CD4-positive, alpha-beta memory T cell (primary cell): ENCODE measurements at regions of chr3 and their contacts with region 1.

Region 1: GRCh38 chr3:125585595-125586223 is 9.6 kb downstream of the OSBPL11 start:
- DNase-seq: peak in 4 of 5 donors; percentile 24 to 33 (median 31)
- H3K4me3 ChIP-seq: no peak overlapping the region
- H3K4me3 Mint-ChIP-seq: peak overlapping the region in 2 of 8 donors; percentile 29 to 30
- H3K27ac ChIP-seq: no peak overlapping the region
- H3K27ac Mint-ChIP-seq: peak overlapping the region in 2 of 7 donors; percentile 29 to 43
- H3K4me1 ChIP-seq: peaks cover 22% of the 10 kb centered on the region
- H3K4me1 Mint-ChIP-seq: peaks cover 13 to 28% (median 19%) of the 10 kb centered on the region in 4 donors
- H3K27me3 ChIP-seq: no peaks in the 10 kb centered on the region
- H3K27me3 Mint-ChIP-seq: no peaks in the 10 kb centered on the region

Region 2: DNA sequence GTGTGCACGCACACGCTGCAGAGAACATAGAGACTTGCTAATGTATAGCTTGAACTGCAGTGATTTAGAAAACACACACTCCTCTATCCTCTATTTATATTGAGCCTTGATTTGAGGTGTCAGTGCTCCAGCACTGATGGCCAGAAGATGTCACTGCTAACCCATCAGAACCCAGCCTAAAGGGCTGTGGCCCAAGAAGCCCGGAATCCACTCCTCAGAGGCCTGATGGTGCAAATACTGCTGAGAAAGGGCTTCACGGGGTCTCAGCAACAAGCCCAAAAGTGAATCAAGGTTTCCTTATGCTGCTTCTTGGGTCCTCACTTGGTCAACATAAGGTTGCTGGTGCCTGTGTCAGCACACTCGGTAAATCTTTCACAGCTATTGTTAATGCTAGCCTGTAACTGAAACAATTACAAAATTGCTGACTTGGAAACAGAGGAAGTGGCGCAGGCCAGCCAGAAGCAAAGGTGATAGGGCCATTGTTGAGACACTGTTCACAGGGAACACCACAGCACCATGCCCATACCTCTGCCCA is 590.2 kb before region 1 on chr3:
- CTCF ChIA-PET with region 1: interaction called, 9 read pairs
- POLR2A ChIA-PET with region 1: no interaction called
- intact Hi-C with region 1: loop called (anchors 5 kb)
- DNase-seq: peak in 4 of 5 donors; percentile 42 to 48 (median 48)
- H3K4me3 ChIP-seq: no peak overlapping the region
- H3K4me3 Mint-ChIP-seq: no peak overlapping the region
- H3K27ac ChIP-seq: no peak overlapping the region
- H3K27ac Mint-ChIP-seq: peak overlapping the region in 2 of 7 donors; percentile 12 to 37
- H3K4me1 ChIP-seq: no peaks in the 10 kb centered on the region
- H3K4me1 Mint-ChIP-seq: peaks cover 0 to 5% (median under 1%) of the 10 kb centered on the region in 4 donors
- H3K27me3 ChIP-seq: no peaks in the 10 kb centered on the region
- H3K27me3 Mint-ChIP-seq: no peaks in the 10 kb centered on the region

Region 3: DNA sequence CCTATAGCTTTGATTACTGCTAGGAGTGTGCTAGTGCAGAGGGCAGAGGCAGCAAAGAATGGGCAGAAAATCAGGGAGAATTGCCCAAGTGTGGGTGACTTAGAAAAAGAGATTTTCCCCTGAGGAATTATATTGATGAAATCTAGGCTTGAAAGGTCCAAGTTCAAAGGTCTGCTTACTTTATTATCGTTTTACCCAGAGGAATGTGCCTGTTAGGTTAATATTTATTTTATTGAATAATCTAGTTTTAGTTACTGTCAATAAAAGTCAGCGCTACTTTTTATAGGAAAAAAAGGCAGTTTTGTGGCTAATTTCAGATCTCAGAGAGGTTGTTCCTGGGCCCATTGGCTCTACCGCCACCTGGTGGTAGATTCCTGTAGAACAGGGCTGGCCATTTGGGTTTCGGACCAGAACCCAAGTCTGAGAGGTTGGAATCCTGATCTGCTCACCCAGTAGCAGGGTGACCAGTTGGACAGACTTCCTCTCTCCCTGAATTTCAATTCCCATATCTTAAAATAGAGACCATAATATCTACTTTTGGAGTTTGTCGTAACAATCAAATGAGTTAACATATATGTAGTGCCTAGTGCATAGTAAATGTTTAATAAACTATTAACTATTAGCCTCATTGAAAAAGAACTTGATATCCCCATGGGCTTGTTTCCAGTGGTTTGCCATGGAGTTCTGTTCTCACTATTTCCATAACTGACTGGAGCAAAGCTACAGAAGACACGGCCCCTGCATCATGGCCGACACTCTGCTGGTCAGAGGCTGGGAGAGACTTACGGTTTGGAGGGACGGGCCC is 147.9 kb before region 1 on chr3:
- CTCF ChIA-PET with region 1: interaction called, 14 read pairs
- POLR2A ChIA-PET with region 1: no interaction called
- intact Hi-C with region 1: loop called (anchors 10 kb)
- DNase-seq: peak; percentile 45 to 60 (median 51)
- H3K4me3 ChIP-seq: no peak overlapping the region
- H3K4me3 Mint-ChIP-seq: no peak overlapping the region
- H3K27ac ChIP-seq: no peak overlapping the region
- H3K27ac Mint-ChIP-seq: no peak overlapping the region
- H3K4me1 ChIP-seq: no peaks in the 10 kb centered on the region
- H3K4me1 Mint-ChIP-seq: peaks cover 0 to 3% (median 3%) of the 10 kb centered on the region in 4 donors
- H3K27me3 ChIP-seq: no peaks in the 10 kb centered on the region
- H3K27me3 Mint-ChIP-seq: no peaks in the 10 kb centered on the region

Region 4: DNA sequence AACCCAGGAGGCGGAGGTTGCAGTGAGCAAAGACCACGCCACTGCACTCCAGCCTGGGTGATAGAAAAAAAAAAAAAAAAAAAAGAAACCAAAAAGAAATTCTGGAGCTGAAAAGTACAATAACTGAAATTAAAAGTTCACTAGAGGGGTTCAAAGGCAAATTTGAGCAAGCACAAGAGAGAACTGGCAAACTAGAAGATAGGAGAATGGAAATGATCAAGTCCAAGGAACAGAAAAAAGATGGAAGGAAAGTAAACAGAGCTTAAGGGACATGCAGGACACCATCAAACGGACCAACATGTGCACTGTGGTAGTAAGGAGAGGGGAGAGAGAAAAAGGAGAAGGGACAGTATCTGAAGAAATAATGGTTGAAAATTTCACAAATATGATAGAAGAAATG is 78.6 kb before region 1 on chr3:
- CTCF ChIA-PET with region 1: no interaction called
- POLR2A ChIA-PET with region 1: no interaction called
- intact Hi-C with region 1: no loop called
- DNase-seq: no peak
- H3K4me3 ChIP-seq: no peak overlapping the region
- H3K4me3 Mint-ChIP-seq: peak overlapping the region in 1 of 8 donors; percentile 46
- H3K27ac ChIP-seq: no peak overlapping the region
- H3K27ac Mint-ChIP-seq: no peak overlapping the region
- H3K4me1 ChIP-seq: peaks cover 6% of the 10 kb centered on the region
- H3K4me1 Mint-ChIP-seq: peaks cover 8 to 18% (median 13%) of the 10 kb centered on the region in 4 donors
- H3K27me3 ChIP-seq: no peaks in the 10 kb centered on the region
- H3K27me3 Mint-ChIP-seq: no peaks in the 10 kb centered on the region

Region 5: GRCh38 chr3:125519678-125520589 is 65.8 kb before region 1 on chr3 and contains the start of gene SNX4:
- CTCF ChIA-PET with region 1: interaction called, 19 read pairs
- POLR2A ChIA-PET with region 1: interaction called, 4 read pairs
- intact Hi-C with region 1: loop called (anchors 2 kb)
- DNase-seq: peak; percentile 81 to 90 (median 83)
- H3K4me3 ChIP-seq: peak within 1 kb of the TSS; percentile 75 to 84
- H3K4me3 Mint-ChIP-seq: peak within 1 kb of the TSS; percentile 90 to 99 (median 96)
- H3K27ac ChIP-seq: peak within 1 kb of the TSS; percentile 66
- H3K27ac Mint-ChIP-seq: peak within 1 kb of the TSS; percentile 82 to 96 (median 95)
- H3K4me1 ChIP-seq: peaks cover 28% of the 10 kb centered on the region
- H3K4me1 Mint-ChIP-seq: peaks cover 21 to 42% (median 35%) of the 10 kb centered on the region in 4 donors
- H3K27me3 ChIP-seq: no peaks in the 10 kb centered on the region
- H3K27me3 Mint-ChIP-seq: no peaks in the 10 kb centered on the region
- total RNA-seq, gene SNX4: 23.0 to 23.6 TPM